Common myeloid progenitor, CD34-positive (primary cell): ENCODE measurements at regions of chr16 and their contacts with region 1.

Region 1: DNA sequence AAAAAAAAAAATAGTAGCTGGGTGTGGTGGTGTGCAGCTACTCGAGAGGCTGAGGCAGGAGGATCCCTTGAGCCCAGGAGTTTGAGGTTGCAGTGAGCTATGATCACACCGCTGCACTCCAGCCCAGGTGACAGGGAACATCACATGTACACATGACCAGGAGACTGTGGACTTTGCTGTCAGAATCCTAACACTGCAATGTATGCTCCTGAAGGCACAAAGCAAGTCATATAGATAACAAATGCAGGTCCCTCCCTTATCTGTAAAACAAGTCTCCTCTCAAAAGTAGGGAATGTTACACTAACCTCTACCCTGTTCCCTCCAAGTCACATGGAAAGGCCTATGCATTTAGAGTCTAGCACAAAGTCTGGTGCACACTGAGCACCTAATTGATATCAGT is 48.5 kb downstream of the ARHGAP17 start:
- DNase-seq: no peak
- H3K4me3 ChIP-seq: no peak overlapping the region
- H3K27ac ChIP-seq: no peak overlapping the region
- H3K4me1 ChIP-seq: no peaks in the 10 kb centered on the region
- H3K27me3 ChIP-seq: no peaks in the 10 kb centered on the region

Region 2: DNA sequence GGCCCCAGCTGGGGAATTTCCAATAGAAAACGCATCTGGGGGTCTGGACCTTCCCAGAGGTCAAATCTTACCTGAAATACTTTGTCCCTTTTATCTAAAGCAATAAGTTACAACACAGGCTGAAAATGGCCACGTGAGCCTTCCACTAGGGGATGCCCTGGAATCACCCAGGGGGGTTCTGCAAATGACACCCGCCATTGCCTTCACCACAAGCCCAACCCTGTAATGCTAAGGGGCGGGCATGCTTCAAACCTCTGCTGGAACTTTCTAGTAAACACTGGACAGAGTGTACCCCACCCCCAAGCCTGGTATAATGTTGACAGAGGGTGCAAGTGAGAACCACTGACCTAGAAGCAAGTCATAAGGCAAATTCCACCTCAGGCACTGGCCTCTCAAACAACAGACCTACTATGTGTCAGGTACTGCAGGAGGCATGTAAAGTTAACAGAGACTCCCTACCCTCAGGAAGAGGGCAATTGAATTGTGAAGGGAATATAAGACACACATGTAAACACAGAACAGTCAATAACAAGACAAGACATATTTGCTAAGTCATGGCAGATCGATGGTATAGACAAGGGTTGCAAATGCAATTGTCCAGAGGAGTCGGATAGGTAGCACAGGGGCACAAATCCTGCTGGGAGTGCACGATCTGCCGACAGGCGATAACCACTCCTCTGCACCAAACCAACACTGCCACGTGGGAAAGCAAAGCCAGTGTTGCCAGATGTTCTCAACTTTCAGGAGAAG is 10.5 kb before region 1 on chr16:
- CTCF ChIA-PET with region 1: interaction called, 12 read pairs
- POLR2A ChIA-PET with region 1: no interaction called
- DNase-seq: peak; percentile 6 to 35 (median 25)
- H3K4me3 ChIP-seq: no peak overlapping the region
- H3K27ac ChIP-seq: no peak overlapping the region
- H3K4me1 ChIP-seq: no peaks in the 10 kb centered on the region
- H3K27me3 ChIP-seq: no peaks in the 10 kb centered on the region